ENCODE measurements at regions of chr3 and their contacts with region 1.

Region 1: DNA sequence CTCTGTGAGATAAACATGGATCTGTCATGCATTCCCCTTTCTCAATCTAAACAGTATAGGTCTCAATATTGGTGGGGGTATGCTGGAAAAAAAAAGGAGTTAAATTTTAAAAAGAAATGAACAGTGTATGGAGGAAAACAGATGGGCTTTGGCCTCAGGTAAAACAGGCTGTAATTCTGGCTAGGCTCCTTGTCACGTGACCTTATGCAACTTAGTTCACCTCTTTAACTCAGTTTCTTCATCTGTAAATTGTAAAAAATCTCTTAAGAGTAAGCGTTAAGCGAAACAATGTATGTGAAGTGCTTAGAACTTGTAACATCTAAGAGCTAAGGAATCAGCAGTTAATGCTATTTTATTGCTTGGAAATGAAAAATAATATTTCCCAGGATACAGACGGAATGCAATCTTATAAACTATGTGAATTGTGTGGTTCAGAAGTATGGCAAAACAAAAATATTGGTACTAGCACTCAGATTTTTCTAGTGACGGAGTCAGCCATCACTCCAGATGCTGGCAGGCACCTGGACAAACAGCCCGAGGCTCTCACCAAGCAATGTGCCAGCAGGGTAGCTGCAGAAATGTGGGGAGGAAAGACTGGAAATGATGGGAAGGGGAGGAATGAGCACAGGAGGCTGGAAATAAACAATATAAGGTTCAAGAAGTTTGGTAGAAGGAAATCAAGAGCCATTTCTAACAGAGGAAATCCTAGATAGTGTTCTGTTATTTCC is 172.8 kb downstream of the USP13 start:
- DNase-seq: no peak
- ATAC-seq: no peak
- H3K4me3 ChIP-seq: no peak overlapping the region
- H3K27ac ChIP-seq: no peak overlapping the region
- H3K4me1 ChIP-seq: no peaks in the 10 kb centered on the region
- H3K27me3 ChIP-seq: no peaks in the 10 kb centered on the region

Region 2: DNA sequence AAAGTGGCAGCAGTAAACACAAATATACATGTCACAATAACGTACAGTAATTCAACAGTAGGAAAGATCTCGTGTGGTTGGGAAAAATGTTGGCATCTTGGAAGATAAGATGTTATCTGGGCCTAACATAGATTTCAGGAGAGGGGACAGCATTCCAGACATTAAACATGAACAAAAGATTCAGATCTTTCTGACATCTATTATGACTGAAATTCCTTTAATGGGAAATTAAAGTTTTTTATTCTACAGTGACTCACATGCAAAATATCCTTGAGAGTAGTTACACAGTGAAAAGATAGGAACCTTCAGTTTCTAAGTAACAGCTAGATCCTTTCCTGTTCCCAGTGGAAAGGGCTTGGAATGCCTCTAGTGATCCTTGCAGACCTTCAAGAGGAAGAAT is 211.9 kb before region 1 on chr3:
- intact Hi-C with region 1: no loop called
- DNase-seq: no peak
- ATAC-seq: no peak
- H3K4me3 ChIP-seq: no peak overlapping the region
- H3K27ac ChIP-seq: no peak overlapping the region
- H3K4me1 ChIP-seq: no peaks in the 10 kb centered on the region
- H3K27me3 ChIP-seq: no peaks in the 10 kb centered on the region

Region 3: DNA sequence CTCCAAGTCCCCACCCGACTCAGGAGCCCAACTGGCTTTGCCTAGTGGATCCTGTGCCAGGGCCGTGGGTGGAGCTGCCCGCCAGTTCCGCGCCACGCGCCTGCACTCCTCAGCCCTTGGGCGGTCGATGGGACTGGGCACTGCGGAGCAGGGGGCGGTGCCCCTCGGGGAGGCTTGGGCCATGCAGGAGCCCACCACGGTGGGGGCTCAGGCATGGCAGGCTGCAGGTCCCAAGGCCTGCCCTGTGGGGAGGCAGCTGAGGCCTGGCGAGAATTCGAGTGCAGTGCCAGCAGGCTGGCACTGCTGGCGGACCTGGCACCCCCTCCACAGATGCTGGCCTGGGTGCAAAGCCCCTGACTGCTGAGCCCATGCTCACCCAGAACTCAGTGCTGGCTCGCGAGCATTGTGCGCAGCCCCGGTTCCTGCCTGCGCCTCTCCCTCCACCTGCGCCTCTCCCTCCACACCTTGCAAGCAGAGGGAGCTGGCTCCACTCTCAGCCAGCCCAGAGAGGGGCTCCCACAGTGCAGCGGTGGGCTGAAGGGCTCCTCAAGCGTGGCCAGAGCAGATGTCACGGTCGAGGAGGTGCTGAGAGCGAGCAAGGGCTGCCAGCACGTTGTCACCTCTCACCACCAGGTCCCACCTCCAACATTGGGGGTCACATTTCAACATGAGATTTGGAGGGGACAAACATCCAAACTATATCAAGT is 50.1 kb before region 1 on chr3:
- intact Hi-C with region 1: loop called in 1 of 2 experiments (anchors 2 kb)
- DNase-seq: no peak
- ATAC-seq: no peak
- H3K4me3 ChIP-seq: no peak overlapping the region
- H3K27ac ChIP-seq: no peak overlapping the region
- H3K4me1 ChIP-seq: no peaks in the 10 kb centered on the region
- H3K27me3 ChIP-seq: no peaks in the 10 kb centered on the region

Region 4: GRCh38 chr3:180018543-180018942 is 192.9 kb after region 1 on chr3:
- intact Hi-C with region 1: no loop called
- DNase-seq: no peak
- ATAC-seq: no peak
- H3K4me3 ChIP-seq: no peak overlapping the region
- H3K27ac ChIP-seq: no peak overlapping the region
- H3K4me1 ChIP-seq: no peaks in the 10 kb centered on the region
- H3K27me3 ChIP-seq: no peaks in the 10 kb centered on the region